ENCODE measurements at regions of chr6 and their contacts with region 1.

Region 1: DNA sequence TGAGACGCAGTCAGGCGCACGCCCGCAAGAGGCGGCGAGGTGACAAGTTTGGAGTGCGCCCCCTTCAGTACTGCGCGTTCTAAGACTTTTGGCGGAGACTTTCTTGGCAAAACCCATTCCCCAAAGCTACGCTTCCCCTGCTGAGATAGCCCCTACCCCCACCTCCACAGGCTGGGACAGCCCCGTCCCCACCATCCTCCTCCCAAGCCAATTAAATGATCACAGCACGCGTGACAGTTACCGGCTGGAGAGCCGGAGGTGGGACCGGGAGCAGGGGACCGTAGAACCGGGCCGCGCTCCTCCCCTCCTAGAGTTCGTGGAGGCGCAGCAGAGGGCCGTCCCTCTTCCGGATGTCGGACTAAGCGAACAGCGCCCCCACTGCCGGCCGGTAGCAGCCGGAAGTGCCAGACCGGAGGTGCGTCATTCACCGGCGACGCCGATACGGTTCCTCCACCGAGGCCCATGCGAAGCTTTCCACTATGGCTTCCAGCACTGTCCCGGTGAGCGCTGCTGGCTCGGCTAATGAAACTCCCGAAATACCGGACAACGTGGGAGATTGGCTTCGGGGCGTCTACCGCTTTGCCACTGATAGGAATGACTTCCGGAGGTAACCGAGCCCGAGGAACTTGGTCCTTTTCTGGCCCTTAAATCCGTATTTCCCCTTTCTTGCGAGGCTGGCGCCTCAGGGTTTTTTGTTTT is at the start of gene TOMM6:
- DNase-seq: peak; percentile 77 to 98
- H3K4me3 ChIP-seq: peak within 1 kb of the TSS; percentile 94 to 100 (median 98)
- H3K27ac ChIP-seq: peak within 1 kb of the TSS; percentile 81
- H3K4me1 ChIP-seq: peaks cover 0 to 4% (median 3%) of the 10 kb centered on the region in 4 experiments; a peak in 6 of 7 replicates
- H3K27me3 ChIP-seq: peaks cover 0 to 27% (median 21%) of the 10 kb centered on the region in 4 experiments; a peak in 6 of 7 replicates
- CTCF ChIP-seq: peak; percentile 90 to 92 (median 90)
- EP300 ChIP-seq: peak in 1 of 2 experiments; percentile 48; a peak in 1 of 3 replicates
- POLR2A ChIP-seq: peak; percentile 90 to 97
- RAD21 ChIP-seq: peak; percentile 1 to 15; a peak in 2 of 4 replicates
- total RNA-seq, gene TOMM6: 216 and 228 TPM in 2 replicates

Region 2: DNA sequence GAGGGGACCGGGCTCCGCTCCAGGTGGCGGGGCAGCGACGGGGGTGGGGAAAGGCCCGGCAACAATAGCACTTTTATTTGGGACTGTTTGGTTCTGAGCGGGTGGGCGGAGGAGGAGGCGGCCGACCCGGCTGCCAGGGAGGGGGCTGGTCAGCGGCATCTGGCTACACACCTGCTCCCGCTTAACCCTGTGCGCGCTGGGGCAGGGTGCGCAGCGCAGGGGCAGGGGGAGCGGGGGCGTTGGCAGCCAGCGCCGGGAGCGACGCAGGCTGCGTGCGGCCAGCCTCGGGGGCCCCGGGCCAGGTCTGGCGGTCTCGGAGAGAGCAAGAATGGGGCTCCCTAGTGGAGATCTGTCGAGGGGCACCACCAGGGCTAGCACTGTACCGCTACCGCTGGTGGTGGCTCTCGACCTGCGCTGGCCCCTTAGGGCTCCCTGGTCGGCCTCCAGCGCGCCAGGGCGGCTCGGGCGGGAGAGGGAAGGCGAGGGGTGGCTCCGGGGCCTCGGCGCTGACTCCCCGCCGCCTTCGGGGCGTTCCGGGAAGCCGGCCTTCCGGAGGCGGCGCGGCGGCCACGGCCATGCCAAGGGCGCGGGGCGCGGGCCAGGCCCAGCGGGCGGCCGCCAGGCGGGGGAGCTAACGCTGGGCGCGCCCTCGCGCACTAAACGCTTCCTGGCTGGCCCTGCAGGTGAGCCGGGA is 359.6 kb before region 1 on chr6:
- CTCF ChIA-PET with region 1: no interaction called
- POLR2A ChIA-PET with region 1: no interaction called
- DNase-seq: peak; percentile 73 to 82
- H3K4me3 ChIP-seq: peak overlapping the region; percentile 40 to 63 (median 40)
- H3K27ac ChIP-seq: no peak overlapping the region
- H3K4me1 ChIP-seq: peaks cover 3 to 38% (median 15%) of the 10 kb centered on the region in 4 experiments
- H3K27me3 ChIP-seq: peaks cover 21 to 62% (median 53%) of the 10 kb centered on the region in 4 experiments
- CTCF ChIP-seq: no peak
- EP300 ChIP-seq: peak in 1 of 2 experiments; percentile 14; a peak in 1 of 3 replicates
- POLR2A ChIP-seq: no peak
- RAD21 ChIP-seq: peak in 1 of 2 experiments; percentile 6; a peak in 1 of 4 replicates

Region 3: DNA sequence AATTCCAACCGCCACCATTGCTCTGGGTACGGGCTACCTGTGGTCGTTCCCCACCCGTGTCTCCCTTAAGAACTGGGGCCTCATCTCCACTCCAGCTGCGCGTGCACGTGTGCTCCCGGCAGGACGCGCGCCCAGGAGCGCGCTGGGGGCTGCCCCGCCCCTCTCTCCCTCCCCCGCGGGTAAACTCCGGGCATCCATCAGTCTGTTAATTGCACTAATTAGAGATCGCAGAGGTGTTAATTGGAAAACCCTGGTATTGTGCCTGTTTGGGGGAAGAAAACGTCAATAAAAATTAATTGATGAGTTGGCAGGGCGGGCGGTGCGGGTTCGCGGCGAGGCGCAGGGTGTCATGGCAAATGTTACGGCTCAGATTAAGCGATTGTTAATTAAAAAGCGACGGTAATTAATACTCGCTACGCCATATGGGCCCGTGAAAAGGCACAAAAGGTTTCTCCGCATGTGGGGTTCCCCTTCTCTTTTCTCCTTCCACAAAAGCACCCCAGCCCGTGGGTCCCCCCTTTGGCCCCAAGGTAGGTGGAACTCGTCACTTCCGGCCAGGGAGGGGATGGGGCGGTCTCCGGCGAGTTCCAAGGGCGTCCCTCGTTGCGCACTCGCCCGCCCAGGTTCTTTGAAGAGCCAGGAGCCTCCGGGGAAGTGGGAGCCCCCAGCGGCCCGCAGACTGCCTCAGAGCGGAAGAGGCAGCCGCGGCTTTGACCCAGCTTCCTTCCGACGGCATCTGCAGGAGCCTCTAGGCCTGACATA is 226.8 kb before region 1 on chr6:
- CTCF ChIA-PET with region 1: no interaction called
- POLR2A ChIA-PET with region 1: no interaction called
- DNase-seq: peak in 1 of 2 experiments; percentile 80
- H3K4me3 ChIP-seq: peak overlapping the region; percentile 56 to 76 (median 72)
- H3K27ac ChIP-seq: no peak overlapping the region
- H3K4me1 ChIP-seq: peaks cover 24 to 39% (median 29%) of the 10 kb centered on the region in 4 experiments
- H3K27me3 ChIP-seq: peaks cover 0 to 16% (median 12%) of the 10 kb centered on the region in 4 experiments; a peak in 5 of 7 replicates
- CTCF ChIP-seq: no peak
- EP300 ChIP-seq: no peak
- POLR2A ChIP-seq: no peak
- RAD21 ChIP-seq: no peak

Region 4: DNA sequence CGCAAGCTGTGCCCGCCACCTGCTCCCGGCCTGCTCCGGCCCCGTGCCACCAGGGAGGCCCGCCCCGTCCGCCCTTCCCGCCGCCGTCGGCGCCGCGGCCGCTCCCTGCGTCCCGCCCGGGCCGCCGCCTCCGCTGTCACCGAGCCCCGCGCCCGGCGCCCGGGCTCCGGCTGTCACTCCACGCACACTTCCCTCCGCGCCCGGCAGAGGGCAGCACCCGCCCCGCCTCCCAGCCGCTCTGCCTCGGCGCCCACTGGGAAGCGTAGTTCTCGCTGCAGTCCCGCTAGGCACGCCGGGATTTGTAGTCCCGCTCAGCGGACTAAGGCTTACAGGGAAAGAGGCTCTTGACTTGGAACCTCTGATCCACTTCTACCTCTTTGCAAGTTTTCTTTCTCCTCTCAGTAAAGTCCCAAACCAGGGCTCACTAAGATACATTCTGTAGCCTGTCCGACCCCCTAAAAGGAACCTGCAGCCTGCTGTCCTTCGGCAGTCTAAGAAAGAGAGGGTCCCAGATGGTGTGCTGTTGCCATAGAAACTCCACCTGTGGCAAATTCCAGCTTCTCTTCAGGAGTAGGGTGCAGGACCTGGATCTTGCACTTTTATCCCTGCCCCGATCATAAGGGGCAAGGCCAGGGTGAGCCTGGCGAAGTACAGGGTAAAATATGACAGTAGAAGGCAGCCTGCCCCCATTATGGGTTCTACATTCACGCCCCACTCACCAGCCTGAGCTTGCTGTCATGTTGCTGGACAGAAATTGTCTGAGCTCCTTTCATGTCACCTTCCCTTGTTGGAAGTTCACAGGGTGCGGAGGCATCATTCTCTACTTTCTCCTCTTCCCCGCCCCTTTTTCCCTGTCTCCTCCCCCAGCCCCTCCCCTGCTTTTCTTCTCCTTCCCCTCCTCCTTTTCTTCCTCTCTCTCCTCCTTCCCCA is 51.7 kb before region 1 on chr6 and contains the start of gene TFEB:
- CTCF ChIA-PET with region 1: interaction called, 13 read pairs
- POLR2A ChIA-PET with region 1: interaction called, 3 read pairs
- DNase-seq: peak in 1 of 2 experiments; percentile 98
- H3K4me3 ChIP-seq: peak within 1 kb of the TSS; percentile 36 to 74 (median 54)
- H3K27ac ChIP-seq: no peak within 1 kb of the TSS
- H3K4me1 ChIP-seq: peaks cover 3 to 27% (median 14%) of the 10 kb centered on the region in 4 experiments
- H3K27me3 ChIP-seq: peaks cover 0 to 8% (median 5%) of the 10 kb centered on the region in 4 experiments; a peak in 3 of 7 replicates
- CTCF ChIP-seq: peak in 2 of 3 experiments; percentile 89 to 92; a peak in 3 of 4 replicates
- EP300 ChIP-seq: no peak
- POLR2A ChIP-seq: no peak
- RAD21 ChIP-seq: peak; percentile 36 to 67
- total RNA-seq, gene TFEB: 2.3 and 2.4 TPM in 2 replicates

Region 5: DNA sequence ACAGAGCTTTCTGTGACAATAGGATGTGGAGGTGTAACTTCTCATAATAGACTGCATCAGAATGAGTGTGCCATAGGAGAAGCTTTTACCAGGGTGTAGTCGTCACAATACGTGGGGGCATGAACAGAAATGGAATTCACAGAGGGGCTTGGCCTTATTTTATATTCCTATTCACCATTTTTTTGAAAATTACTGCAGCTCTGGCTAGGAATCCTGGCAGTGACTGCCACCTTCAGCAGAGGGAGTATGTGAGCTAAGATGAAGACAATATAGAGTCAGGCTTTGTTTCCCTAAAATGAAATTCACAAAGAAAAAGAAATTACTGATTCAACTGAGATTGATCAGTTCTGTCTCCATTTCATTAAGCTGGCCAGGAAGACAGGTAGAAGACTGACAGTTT is 14.0 kb after region 1 on chr6:
- CTCF ChIA-PET with region 1: interaction called, 36 read pairs
- POLR2A ChIA-PET with region 1: interaction called, 8 read pairs
- DNase-seq: no peak
- H3K4me3 ChIP-seq: no peak overlapping the region
- H3K27ac ChIP-seq: no peak overlapping the region
- H3K4me1 ChIP-seq: no peaks in the 10 kb centered on the region
- H3K27me3 ChIP-seq: no peaks in the 10 kb centered on the region
- CTCF ChIP-seq: peak in 2 of 3 experiments; percentile 35 to 41; a peak in 2 of 4 replicates
- EP300 ChIP-seq: no peak
- POLR2A ChIP-seq: no peak
- RAD21 ChIP-seq: peak; percentile 47 to 57

Region 6: GRCh38 chr6:41920921-41921711 is 133.7 kb after region 1 on chr6 and contains the starts of genes BYSL and MED20:
- CTCF ChIA-PET with region 1: interaction called, 37 read pairs
- POLR2A ChIA-PET with region 1: interaction called, 31 read pairs
- DNase-seq: peak; percentile 75 to 97
- H3K4me3 ChIP-seq: peak within 1 kb of the TSS; percentile 79 to 98 (median 87)
- H3K27ac ChIP-seq: peak within 1 kb of the TSS; percentile 98
- H3K4me1 ChIP-seq: peaks cover 1 to 11% (median 4%) of the 10 kb centered on the region in 4 experiments; a peak in 3 of 7 replicates
- H3K27me3 ChIP-seq: no peaks in the 10 kb centered on the region
- CTCF ChIP-seq: peak; percentile 78 to 88 (median 83)
- EP300 ChIP-seq: no peak
- POLR2A ChIP-seq: peak; percentile 64 to 80; a peak in 2 of 3 replicates
- RAD21 ChIP-seq: peak; percentile 4 to 33; a peak in 3 of 4 replicates
- total RNA-seq, gene BYSL: 43.9 and 49.2 TPM in 2 replicates
- total RNA-seq, gene MED20: 38.7 and 42.9 TPM in 2 replicates

Region 7: GRCh38 chr6:41996997-41997396 is 209.6 kb after region 1 on chr6:
- CTCF ChIA-PET with region 1: no interaction called
- POLR2A ChIA-PET with region 1: no interaction called
- DNase-seq: no peak
- H3K4me3 ChIP-seq: no peak overlapping the region
- H3K27ac ChIP-seq: no peak overlapping the region
- H3K4me1 ChIP-seq: no peaks in the 10 kb centered on the region
- H3K27me3 ChIP-seq: no peaks in the 10 kb centered on the region
- CTCF ChIP-seq: no peak
- EP300 ChIP-seq: no peak
- POLR2A ChIP-seq: no peak
- RAD21 ChIP-seq: no peak

Region 8: GRCh38 chr6:42050266-42051032 is 263.1 kb after region 1 on chr6 and contains the start of gene TAF8:
- CTCF ChIA-PET with region 1: interaction called, 108 read pairs
- POLR2A ChIA-PET with region 1: interaction called, 8 read pairs
- DNase-seq: peak; percentile 79 to 91
- H3K4me3 ChIP-seq: peak within 1 kb of the TSS; percentile 85 to 99 (median 90)
- H3K27ac ChIP-seq: peak within 1 kb of the TSS; percentile 95
- H3K4me1 ChIP-seq: peaks cover 13 to 16% (median 14%) of the 10 kb centered on the region in 4 experiments
- H3K27me3 ChIP-seq: peaks cover 38 to 45% (median 42%) of the 10 kb centered on the region in 4 experiments
- CTCF ChIP-seq: no peak; a peak in 1 of 4 replicates
- EP300 ChIP-seq: no peak
- POLR2A ChIP-seq: peak in 1 of 2 experiments; percentile 100; a peak in 2 of 3 replicates
- RAD21 ChIP-seq: 0 out of 4 replicates have a peak, but pooled peaks of 1 of the 2 experiments have one; percentile 4
- total RNA-seq, gene TAF8: 32.7 and 34.0 TPM in 2 replicates

Region 9: GRCh38 chr6:42197555-42198362 is 410.4 kb after region 1 on chr6:
- CTCF ChIA-PET with region 1: no interaction called
- POLR2A ChIA-PET with region 1: no interaction called
- DNase-seq: no peak
- H3K4me3 ChIP-seq: no peak overlapping the region
- H3K27ac ChIP-seq: no peak overlapping the region
- H3K4me1 ChIP-seq: peaks cover 0 to 4% (median 2%) of the 10 kb centered on the region in 4 experiments; a peak in 5 of 7 replicates
- H3K27me3 ChIP-seq: peaks cover 0 to 3% (median 0%) of the 10 kb centered on the region in 4 experiments; a peak in 1 of 7 replicates
- CTCF ChIP-seq: no peak
- EP300 ChIP-seq: no peak
- POLR2A ChIP-seq: no peak
- RAD21 ChIP-seq: no peak